ENCODE measurements at regions of chr19 and their contacts with region 1.

Region 1: DNA sequence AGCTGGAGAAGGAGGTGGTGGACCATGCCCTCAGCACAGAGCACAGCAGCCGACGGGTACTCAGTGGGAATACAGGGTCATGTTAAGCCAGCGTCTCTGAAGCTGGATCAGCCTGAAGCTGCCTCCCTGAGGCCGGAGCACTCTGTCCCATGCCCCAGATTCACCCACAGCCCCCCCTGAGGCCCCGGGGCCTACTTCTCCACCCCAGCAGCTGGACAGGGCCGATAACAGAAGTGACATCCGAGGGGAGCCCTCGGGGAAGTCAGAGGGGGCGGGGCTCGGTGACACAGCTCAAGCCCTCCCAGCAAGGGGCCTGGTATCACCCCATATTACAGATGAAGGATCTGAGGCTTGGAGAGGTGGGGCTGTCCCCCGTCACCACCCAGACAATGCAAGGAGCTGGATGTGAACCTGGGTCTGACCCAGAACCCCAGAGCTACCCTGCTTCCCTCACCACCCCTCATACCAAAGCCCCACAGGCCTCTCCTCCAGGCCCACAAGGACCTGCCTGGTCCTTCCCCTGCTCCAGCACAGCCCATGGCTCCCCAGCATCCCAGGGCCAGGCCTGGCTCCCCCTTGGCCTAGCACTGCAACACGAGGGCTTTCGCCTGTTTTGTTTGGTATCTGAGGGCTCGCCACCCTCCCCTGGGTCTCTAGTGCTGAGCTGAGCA is 5.7 kb downstream of the R3HDM4 start:
- DNase-seq: no peak
- CTCF ChIP-seq: no peak

Region 2: DNA sequence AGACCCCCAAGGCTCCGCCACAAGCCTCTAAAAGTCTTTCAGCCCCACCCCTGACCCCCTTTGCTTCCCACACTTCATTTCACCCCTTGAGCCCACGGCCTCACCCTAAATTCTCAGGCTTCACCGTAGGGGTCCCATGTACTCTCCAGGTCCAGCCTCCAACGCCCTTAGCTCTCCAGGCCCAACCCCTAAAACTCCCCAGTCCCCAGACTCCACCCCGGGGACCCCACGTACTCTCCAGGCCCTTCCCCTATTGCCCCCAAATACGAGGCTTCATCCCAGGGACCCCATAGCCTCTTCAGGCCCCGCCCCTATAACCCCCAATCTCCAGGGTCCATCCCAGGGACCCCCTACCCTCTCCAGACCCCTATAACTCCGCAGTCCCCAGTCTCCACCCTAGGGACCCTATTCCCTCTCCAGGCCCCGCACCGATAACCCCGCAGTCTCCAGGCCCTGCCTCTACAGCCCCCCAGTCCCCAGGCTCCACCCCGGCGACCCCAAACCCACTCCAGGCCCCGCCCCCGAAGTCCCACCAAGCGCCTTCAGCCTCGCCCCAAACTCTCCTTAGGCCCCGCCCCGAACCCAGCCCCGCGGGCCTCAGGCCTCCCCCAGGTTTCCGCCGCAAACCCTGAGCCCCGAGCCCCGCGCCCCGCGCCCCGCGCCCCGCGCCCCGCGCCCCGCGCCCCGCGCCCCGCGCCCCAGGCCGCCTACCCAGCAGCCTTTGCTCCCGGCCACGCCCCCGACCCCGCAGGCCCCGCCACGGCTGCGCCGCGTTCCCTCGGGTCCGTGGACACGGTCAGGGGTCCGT is 14.9 kb before region 1 on chr19:
- CTCF ChIA-PET with region 1: interaction called, 21 read pairs
- POLR2A ChIA-PET with region 1: interaction called, 8 read pairs
- DNase-seq: no peak
- CTCF ChIP-seq: no peak

Region 3: DNA sequence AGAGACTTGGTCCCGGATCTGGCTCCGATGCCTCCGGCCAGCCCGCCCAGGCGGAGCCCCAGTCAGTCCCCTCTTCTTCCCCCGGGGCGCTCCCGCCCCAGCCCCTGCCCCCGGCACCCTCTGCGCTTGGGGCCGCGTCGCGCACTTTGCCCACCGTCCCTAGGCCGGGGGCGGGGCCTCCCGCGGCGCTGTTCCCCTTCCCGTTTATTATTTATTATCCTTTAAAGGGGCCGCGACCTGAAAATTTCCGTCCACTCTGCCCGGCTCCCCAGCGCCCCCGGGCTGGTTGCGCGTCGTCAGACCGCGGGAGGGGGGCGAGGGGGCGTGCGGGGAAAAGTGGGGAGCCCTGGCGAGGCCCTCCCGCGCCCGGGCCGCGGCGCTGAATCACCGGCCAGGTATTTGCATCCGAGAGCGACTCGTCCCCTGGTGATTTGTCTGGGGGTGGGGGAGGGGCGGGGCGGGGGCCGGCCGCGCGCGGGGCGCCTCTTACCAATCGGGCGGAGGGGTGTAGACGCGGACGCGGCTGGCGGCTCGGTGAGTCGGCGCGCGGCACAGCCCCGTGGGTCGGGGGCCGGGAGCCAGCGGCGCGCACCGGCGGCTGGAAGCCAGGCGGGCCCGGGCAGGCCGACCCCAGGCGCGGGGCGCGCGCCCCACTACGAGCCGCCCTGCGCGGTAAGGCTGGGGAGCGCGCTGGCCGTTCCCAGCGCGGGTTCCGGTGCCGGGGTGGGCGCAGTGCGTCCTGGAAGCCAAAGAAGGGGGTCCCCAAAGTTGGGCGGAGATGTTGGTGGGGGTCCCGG is 18.4 kb after region 1 on chr19 and contains the start of gene ARID3A:
- CTCF ChIA-PET with region 1: interaction called, 10 read pairs
- POLR2A ChIA-PET with region 1: no interaction called
- DNase-seq: peak; percentile 88
- CTCF ChIP-seq: no peak

Measured in GM10248 (cell line).